ENCODE measurements at regions of chr19 and their contacts with region 1.

Region 1: DNA sequence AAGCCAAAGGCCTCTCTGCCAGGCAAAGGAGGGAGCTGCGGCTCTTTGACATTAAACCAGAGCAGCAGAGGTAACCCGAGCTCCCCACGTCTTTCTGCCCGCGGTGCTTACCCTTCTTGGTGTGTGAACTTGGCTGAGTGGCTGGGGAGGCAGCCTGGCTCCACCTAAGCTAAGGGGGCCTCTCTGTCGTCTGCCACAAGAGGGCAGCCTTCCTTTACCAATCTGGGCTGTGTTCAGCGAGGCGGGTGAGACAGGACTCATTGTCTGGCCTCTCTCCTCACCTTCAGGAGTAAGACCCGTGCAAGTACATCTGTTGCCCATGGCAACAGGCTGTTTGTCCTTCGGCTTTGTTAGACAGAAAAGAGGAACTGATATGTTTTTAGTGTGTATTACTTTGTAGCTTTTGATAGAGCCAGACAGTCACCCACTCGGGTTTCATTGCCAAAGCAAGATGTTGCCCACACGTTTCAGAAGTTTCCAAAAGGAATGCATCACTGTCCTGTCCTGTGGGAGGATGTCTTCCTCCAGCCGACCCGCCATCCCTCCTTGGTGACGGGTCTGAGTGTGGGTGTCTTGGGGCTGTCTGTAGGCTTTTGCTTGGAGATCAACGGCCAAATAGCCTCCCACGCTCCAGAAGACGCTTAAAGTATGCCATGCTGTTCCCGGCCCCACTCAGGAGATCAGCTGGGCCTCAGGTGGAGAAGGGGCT is 4.6 kb downstream of the POP4 start:
- DNase-seq: peak; percentile 77 to 85 (median 80)
- ATAC-seq: peak; percentile 65 to 84 (median 78)
- H3K4me3 ChIP-seq: no peak overlapping the region
- H3K27ac ChIP-seq: no peak overlapping the region
- H3K4me1 ChIP-seq: peaks cover 0 to 15% (median 8%) of the 10 kb centered on the region in 12 donors
- H3K27me3 ChIP-seq: no peaks in the 10 kb centered on the region
- CTCF ChIP-seq: peak; percentile 79 to 91 (median 83)
- POLR2A ChIP-seq: no peak

Region 2: GRCh38 chr19:29212648-29213573 is 397.8 kb before region 1 on chr19 and contains the start of gene UQCRFS1:
- intact Hi-C with region 1: loop called in 1 of 10 experiments (anchors 5 kb)
- DNase-seq: peak; percentile 95 to 98 (median 97)
- ATAC-seq: peak; percentile 97 to 100 (median 99)
- H3K4me3 ChIP-seq: peak within 1 kb of the TSS; percentile 65 to 99 (median 90)
- H3K27ac ChIP-seq: peak within 1 kb of the TSS; percentile 77 to 98 (median 95)
- H3K4me1 ChIP-seq: peaks cover 0 to 40% (median 19%) of the 10 kb centered on the region in 12 donors
- H3K27me3 ChIP-seq: no peaks in the 10 kb centered on the region
- CTCF ChIP-seq: peak in 2 of 12 donors; percentile 4 to 5
- POLR2A ChIP-seq: peak in 1 of 2 donors; percentile 89
- total RNA-seq, gene UQCRFS1: 87.6 to 160 (median 130) TPM

Region 3: DNA sequence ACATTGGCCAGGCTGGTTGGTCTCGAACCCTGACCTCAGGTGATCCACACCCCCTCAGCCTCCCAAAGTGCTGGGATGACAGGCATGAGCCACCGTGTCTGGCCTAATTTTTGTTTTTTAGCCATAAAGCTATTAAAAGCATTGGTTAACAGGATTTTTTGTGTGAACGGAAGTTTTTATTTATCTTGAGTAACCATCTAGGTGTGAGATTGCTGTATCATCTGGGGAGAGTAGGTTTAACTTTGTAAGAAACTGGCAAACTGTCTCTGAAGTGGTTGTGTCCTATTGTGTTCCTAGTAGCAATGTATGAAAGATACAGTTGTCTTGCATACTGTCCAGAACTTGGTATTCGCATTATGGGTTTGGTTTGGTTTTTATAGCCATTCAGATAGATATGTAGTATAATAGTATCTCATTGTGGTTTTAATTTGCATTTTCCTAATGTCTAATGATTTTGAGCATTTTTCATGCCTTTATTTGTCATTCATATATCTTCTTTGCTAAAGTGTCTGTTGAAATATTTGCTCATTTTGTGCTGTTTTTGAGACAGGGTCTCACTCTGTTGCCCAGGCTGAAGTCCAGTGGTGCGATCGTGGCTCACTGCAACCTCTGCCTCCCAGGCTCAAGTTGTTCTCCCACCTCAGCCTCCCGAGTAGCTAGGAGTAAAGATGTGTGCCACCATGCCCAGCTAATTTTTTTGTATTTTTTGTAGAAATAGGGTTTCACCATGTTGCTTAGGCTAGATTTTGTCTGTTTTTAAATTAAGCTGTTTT is 41.1 kb after region 1 on chr19:
- intact Hi-C with region 1: no loop called
- DNase-seq: no peak
- ATAC-seq: no peak
- H3K4me3 ChIP-seq: no peak overlapping the region
- H3K27ac ChIP-seq: no peak overlapping the region
- H3K4me1 ChIP-seq: no peaks in the 10 kb centered on the region
- H3K27me3 ChIP-seq: no peaks in the 10 kb centered on the region
- CTCF ChIP-seq: no peak
- POLR2A ChIP-seq: no peak

Region 4: GRCh38 chr19:29694669-29695627 is 84.2 kb after region 1 on chr19:
- intact Hi-C with region 1: loop called in 6 of 10 experiments (anchors 1 to 5 kb)
- DNase-seq: peak; percentile 72 to 90 (median 86)
- ATAC-seq: peak; percentile 91 to 98 (median 96)
- H3K4me3 ChIP-seq: no peak overlapping the region
- H3K27ac ChIP-seq: peak overlapping the region in 1 of 12 donors; percentile 40
- H3K4me1 ChIP-seq: peaks cover 0 to 7% (median 2%) of the 10 kb centered on the region in 12 donors
- H3K27me3 ChIP-seq: no peaks in the 10 kb centered on the region
- CTCF ChIP-seq: peak; percentile 82 to 95 (median 87)
- POLR2A ChIP-seq: no peak

Region 5: DNA sequence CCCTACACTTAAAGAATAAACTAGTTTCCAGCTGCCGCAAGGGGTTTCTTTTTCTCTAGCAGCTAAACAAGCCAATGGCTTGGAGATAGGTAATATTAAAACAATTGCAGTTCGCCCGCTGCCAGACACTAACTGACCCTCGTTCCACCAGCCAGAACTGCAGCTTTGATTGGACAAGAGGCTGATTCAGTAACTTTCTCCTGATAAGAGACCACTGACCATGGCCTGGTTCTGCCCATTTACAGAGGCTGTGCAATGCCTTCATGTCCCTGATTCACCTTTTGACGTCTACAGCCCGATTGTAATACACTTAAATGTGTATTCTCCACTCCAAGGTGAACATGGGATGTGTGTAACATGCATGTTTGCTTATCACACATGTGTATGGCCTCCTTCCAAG is 117.2 kb after region 1 on chr19:
- intact Hi-C with region 1: no loop called
- DNase-seq: no peak
- ATAC-seq: no peak
- H3K4me3 ChIP-seq: no peak overlapping the region
- H3K27ac ChIP-seq: no peak overlapping the region
- H3K4me1 ChIP-seq: peaks cover 0 to 14% (median 11%) of the 10 kb centered on the region in 12 donors
- H3K27me3 ChIP-seq: peaks cover 0 to 58% (median 7%) of the 10 kb centered on the region in 9 donors
- CTCF ChIP-seq: no peak
- POLR2A ChIP-seq: no peak

Region 6: DNA sequence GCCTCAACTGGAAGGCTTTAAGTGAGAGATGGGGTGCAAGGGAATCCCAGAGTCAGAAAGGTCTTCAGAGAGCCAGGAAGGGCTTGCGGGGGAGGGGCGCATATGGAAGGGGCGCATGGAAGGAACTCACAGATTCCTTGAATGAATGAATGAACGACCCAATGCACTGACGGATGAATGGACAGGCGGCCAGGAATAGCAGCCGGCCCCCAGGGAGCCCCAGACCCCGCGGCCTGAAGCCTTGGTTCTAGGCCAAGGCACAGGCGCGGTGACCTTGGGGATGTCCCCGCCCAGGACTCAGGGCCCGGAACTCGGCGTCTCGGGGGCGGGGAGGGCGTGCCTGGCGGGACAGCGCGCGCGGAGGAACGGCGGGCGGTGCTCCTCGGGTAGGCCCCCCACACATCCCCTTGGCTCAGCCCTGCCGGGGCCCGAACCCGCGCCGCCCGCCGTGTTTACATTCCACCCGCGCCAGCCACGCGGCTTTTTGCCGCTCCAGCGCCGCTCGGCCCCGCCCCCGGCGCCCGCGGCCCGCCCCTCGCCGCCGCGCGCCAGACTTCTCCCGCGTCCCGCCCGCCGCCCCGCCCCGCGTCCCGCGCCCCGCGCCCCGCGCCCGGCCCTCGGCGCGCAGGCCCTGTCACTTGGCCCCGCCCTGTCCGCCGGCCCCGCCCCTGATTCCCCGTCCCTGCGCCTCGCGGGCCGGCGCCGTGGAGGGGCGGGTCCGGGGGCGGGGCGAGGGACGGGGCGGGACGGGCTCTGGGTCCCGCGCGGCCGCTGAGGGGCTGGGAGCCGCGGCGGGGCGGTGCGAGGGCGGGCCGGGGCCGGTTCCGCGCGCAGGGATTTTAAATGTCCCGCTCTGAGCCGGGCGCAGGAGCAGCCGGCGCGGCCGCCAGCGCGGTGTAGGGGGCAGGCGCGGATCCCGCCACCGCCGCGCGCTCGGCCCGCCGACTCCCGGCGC is 200.7 kb after region 1 on chr19 and contains the start of gene CCNE1:
- intact Hi-C with region 1: loop called in 1 of 10 experiments (anchors 5 kb)
- DNase-seq: peak; percentile 94 to 97 (median 96)
- ATAC-seq: peak; percentile 91 to 99 (median 98)
- H3K4me3 ChIP-seq: peak within 1 kb of the TSS; percentile 37 to 86 (median 64)
- H3K27ac ChIP-seq: peak within 1 kb of the TSS in 11 of 12 donors; percentile 49 to 73 (median 65)
- H3K4me1 ChIP-seq: peaks cover 0 to 18% (median 6%) of the 10 kb centered on the region in 12 donors
- H3K27me3 ChIP-seq: no peaks in the 10 kb centered on the region
- CTCF ChIP-seq: no peak
- POLR2A ChIP-seq: peak in 1 of 2 donors; percentile 19
- total RNA-seq, gene CCNE1: 1.3 to 5.4 (median 2.5) TPM

Region 7: GRCh38 chr19:29873024-29873800 is 262.5 kb after region 1 on chr19:
- intact Hi-C with region 1: loop called in 2 of 10 experiments (anchors 10 kb)
- DNase-seq: peak in 3 of 5 donors; percentile 49 to 80 (median 59)
- ATAC-seq: peak in 3 of 4 donors; percentile 54 to 84 (median 79)
- H3K4me3 ChIP-seq: peak overlapping the region; percentile 21 to 59 (median 51)
- H3K27ac ChIP-seq: no peak overlapping the region
- H3K4me1 ChIP-seq: peaks cover 0 to 29% (median 12%) of the 10 kb centered on the region in 12 donors
- H3K27me3 ChIP-seq: peaks cover 0 to 34% (median 19%) of the 10 kb centered on the region in 9 donors
- CTCF ChIP-seq: peak; percentile 68 to 95 (median 88)
- POLR2A ChIP-seq: no peak